ENCODE measurements at regions of chr12 and their contacts with region 1.

Region 1: GRCh38 chr12:54879150-54879549 is 24.8 kb downstream of the MUCL1 start:
- DNase-seq: no peak
- H3K4me3 ChIP-seq: no peak overlapping the region
- H3K27ac ChIP-seq: no peak overlapping the region
- H3K4me1 ChIP-seq: peaks cover 5% of the 10 kb centered on the region
- H3K27me3 ChIP-seq: no peaks in the 10 kb centered on the region
- CTCF ChIP-seq: no peak

Region 2: DNA sequence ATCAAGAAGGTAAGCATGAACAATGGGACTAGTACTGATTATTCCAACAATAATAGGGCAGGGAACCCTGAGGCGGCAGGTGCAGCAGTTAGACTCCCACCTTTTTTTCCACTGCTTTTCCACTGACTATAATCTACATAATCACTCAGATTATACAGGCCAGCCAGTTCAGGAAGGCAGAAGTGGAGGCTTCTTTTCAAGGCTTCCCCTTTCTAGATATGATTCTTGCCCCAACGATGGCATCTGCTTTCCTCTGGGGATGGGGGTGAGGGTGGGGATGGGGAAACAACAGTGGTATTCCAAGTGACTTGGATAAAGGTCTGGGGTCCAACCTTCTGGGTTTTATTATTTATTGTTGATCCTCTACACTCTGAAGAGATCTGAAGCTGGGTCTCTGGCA is 381.3 kb before region 1 on chr12:
- CTCF ChIA-PET with region 1: no interaction called
- dilution Hi-C with region 1: no loop called
- in situ Hi-C with region 1: no loop called
- intact Hi-C with region 1: no loop called
- DNase-seq: no peak
- H3K4me3 ChIP-seq: no peak overlapping the region
- H3K27ac ChIP-seq: no peak overlapping the region
- H3K4me1 ChIP-seq: no peaks in the 10 kb centered on the region
- H3K27me3 ChIP-seq: no peaks in the 10 kb centered on the region
- CTCF ChIP-seq: no peak

Region 3: GRCh38 chr12:54935235-54935951 is 56.2 kb after region 1 on chr12:
- CTCF ChIA-PET with region 1: no interaction called
- dilution Hi-C with region 1: no loop called
- in situ Hi-C with region 1: loop called in 1 of 2 experiments (anchors 10 kb)
- intact Hi-C with region 1: no loop called
- DNase-seq: peak; percentile 96
- H3K4me3 ChIP-seq: no peak overlapping the region
- H3K27ac ChIP-seq: peak overlapping the region; percentile 95
- H3K4me1 ChIP-seq: peaks cover 55% of the 10 kb centered on the region
- H3K27me3 ChIP-seq: no peaks in the 10 kb centered on the region
- CTCF ChIP-seq: peak in 1 of 2 donors; percentile 19

Region 4: GRCh38 chr12:55037351-55037987 is 158.3 kb after region 1 on chr12:
- CTCF ChIA-PET with region 1: no interaction called
- dilution Hi-C with region 1: no loop called
- in situ Hi-C with region 1: no loop called
- intact Hi-C with region 1: no loop called
- DNase-seq: no peak
- H3K4me3 ChIP-seq: no peak overlapping the region
- H3K27ac ChIP-seq: no peak overlapping the region
- H3K4me1 ChIP-seq: no peaks in the 10 kb centered on the region
- H3K27me3 ChIP-seq: peaks cover 16% of the 10 kb centered on the region
- CTCF ChIP-seq: no peak

Measured in mammary epithelial cell (primary cell).